Dendritic cell treated with granulocyte-macrophage colony-stimulating factor and Interleukin-4, amounts not matched to agents 40 ng/mL and 50 ng/mL, for 4 days (primary cell): ENCODE measurements at regions of chr17 and their contacts with region 1.

Region 1: GRCh38 chr17:21214015-21214776 is at the start of gene TMEM11:
- H3K4me3 Mint-ChIP-seq: peak within 1 kb of the TSS; percentile 87
- H3K27ac Mint-ChIP-seq: peak within 1 kb of the TSS; percentile 93
- H3K4me1 Mint-ChIP-seq: peaks cover 67% of the 10 kb centered on the region
- H3K27me3 Mint-ChIP-seq: no peaks in the 10 kb centered on the region

Region 2: GRCh38 chr17:21126645-21127510 is 87.3 kb before region 1 on chr17 and contains the start of gene DHRS7B:
- intact Hi-C with region 1: loop called (anchors 5 kb)
- H3K4me3 Mint-ChIP-seq: peak within 1 kb of the TSS; percentile 85
- H3K27ac Mint-ChIP-seq: peak within 1 kb of the TSS; percentile 98
- H3K4me1 Mint-ChIP-seq: peaks cover 48% of the 10 kb centered on the region
- H3K27me3 Mint-ChIP-seq: no peaks in the 10 kb centered on the region

Region 3: GRCh38 chr17:21252796-21253645 is 38.8 kb after region 1 on chr17 and contains the start of gene NATD1:
- intact Hi-C with region 1: loop called (anchors 1 kb)
- H3K4me3 Mint-ChIP-seq: peak within 1 kb of the TSS; percentile 77
- H3K27ac Mint-ChIP-seq: peak within 1 kb of the TSS; percentile 67
- H3K4me1 Mint-ChIP-seq: peaks cover 34% of the 10 kb centered on the region
- H3K27me3 Mint-ChIP-seq: peaks cover 1% of the 10 kb centered on the region